ENCODE measurements at regions of chr17 and their contacts with region 1.

Region 1: GRCh38 chr17:17001874-17002520 is 30.1 kb upstream of the TNFRSF13B start:
- DNase-seq: peak; percentile 56 to 95 (median 81)
- ATAC-seq: peak; percentile 98
- H3K4me3 ChIP-seq: no peak overlapping the region
- H3K27ac ChIP-seq: no peak overlapping the region
- H3K4me1 ChIP-seq: peaks cover 0 to 6% of the 10 kb centered on the region in 2 donors
- H3K27me3 ChIP-seq: no peaks in the 10 kb centered on the region
- CTCF ChIP-seq: peak; percentile 97 to 98

Region 2: GRCh38 chr17:17063546-17064122 is 61.6 kb after region 1 on chr17:
- intact Hi-C with region 1: no loop called
- DNase-seq: peak in 1 of 4 donors; percentile 81
- ATAC-seq: peak; percentile 80
- H3K4me3 ChIP-seq: no peak overlapping the region
- H3K27ac ChIP-seq: no peak overlapping the region
- H3K4me1 ChIP-seq: peaks cover 13 to 56% of the 10 kb centered on the region in 2 donors
- H3K27me3 ChIP-seq: no peaks in the 10 kb centered on the region
- CTCF ChIP-seq: no peak

Region 3: GRCh38 chr17:17216776-17217175 is 214.8 kb after region 1 on chr17:
- intact Hi-C with region 1: loop called in 1 of 2 experiments (anchors 10 kb)
- DNase-seq: no peak
- ATAC-seq: no peak
- H3K4me3 ChIP-seq: no peak overlapping the region
- H3K27ac ChIP-seq: no peak overlapping the region
- H3K4me1 ChIP-seq: no peaks in the 10 kb centered on the region
- H3K27me3 ChIP-seq: no peaks in the 10 kb centered on the region
- CTCF ChIP-seq: no peak